ENCODE measurements at regions of chr2 and their contacts with region 1.

Region 1: GRCh38 chr2:54704688-54705605 is 18.5 kb upstream of the EML6 start:
- DNase-seq: peak; percentile 40 to 74
- ATAC-seq: peak; percentile 81 to 89; a peak in 5 of 6 replicates
- H3K4me3 ChIP-seq: no peak overlapping the region
- H3K27ac ChIP-seq: no peak overlapping the region
- H3K4me1 ChIP-seq: no peaks in the 10 kb centered on the region
- CTCF ChIP-seq: peak; percentile 93
- EP300 ChIP-seq: no peak
- POLR2A ChIP-seq: no peak
- RAD21 ChIP-seq: peak; percentile 93 to 95

Region 2: DNA sequence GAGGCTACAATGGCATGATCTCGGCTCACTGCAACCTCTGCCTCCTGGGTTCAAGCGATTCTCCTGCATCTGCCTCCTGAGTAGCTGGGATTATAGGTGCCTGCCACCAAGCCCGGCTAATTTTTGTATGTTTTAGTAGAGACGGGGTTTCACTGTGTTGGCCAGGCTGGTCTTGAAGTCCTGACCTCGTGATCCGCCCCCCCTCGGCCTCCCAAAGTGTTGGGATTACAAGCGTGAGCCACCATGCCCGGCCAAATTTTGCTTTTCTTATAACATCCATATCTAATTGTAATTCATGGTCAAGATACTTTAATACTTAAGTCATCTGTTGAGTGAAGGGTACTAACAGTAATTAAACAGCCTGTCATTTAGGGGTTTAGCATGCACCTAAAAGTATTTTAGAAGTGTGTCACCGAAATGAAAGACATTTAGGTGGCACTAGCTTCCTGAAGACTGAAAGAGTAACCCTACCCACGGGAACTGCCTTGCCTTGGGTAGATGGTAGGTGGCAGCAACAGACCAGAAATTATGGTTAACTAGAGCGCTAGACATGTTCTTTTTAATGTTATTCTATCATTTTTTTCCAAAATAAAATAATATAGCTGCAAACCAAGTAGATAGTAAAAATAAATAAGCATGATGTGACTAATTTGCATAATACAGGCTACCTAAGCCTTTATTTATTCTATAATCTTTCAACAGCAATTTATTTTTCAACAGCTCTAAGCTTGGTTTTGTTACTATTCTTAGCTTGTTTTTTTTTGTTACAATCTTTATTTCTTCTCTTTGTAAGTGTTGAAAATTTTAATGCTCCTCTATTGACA is 598.1 kb before region 1 on chr2:
- CTCF ChIA-PET with region 1: interaction called, 73 read pairs
- POLR2A ChIA-PET with region 1: interaction called, 10 read pairs
- DNase-seq: peak; percentile 51 to 72
- ATAC-seq: peak; percentile 83 to 88
- H3K4me3 ChIP-seq: no peak overlapping the region
- H3K27ac ChIP-seq: peak overlapping the region in 1 of 2 experiments; percentile 22; a peak in 1 of 6 replicates
- H3K4me1 ChIP-seq: peaks cover 19% of the 10 kb centered on the region
- CTCF ChIP-seq: peak; percentile 94
- EP300 ChIP-seq: no peak
- POLR2A ChIP-seq: no peak
- RAD21 ChIP-seq: peak; percentile 92 to 94

Region 3: GRCh38 chr2:54228945-54229344 is 476.0 kb before region 1 on chr2:
- CTCF ChIA-PET with region 1: no interaction called
- POLR2A ChIA-PET with region 1: no interaction called
- DNase-seq: no peak
- ATAC-seq: no peak
- H3K4me3 ChIP-seq: no peak overlapping the region
- H3K27ac ChIP-seq: no peak overlapping the region
- H3K4me1 ChIP-seq: no peaks in the 10 kb centered on the region
- CTCF ChIP-seq: no peak
- EP300 ChIP-seq: no peak
- POLR2A ChIP-seq: no peak
- RAD21 ChIP-seq: no peak

Region 4: GRCh38 chr2:54350426-54350825 is 354.5 kb before region 1 on chr2:
- CTCF ChIA-PET with region 1: no interaction called
- POLR2A ChIA-PET with region 1: no interaction called
- DNase-seq: no peak
- ATAC-seq: no peak
- H3K4me3 ChIP-seq: no peak overlapping the region
- H3K27ac ChIP-seq: no peak overlapping the region
- H3K4me1 ChIP-seq: no peaks in the 10 kb centered on the region
- CTCF ChIP-seq: no peak
- EP300 ChIP-seq: no peak
- POLR2A ChIP-seq: no peak
- RAD21 ChIP-seq: no peak

Region 5: DNA sequence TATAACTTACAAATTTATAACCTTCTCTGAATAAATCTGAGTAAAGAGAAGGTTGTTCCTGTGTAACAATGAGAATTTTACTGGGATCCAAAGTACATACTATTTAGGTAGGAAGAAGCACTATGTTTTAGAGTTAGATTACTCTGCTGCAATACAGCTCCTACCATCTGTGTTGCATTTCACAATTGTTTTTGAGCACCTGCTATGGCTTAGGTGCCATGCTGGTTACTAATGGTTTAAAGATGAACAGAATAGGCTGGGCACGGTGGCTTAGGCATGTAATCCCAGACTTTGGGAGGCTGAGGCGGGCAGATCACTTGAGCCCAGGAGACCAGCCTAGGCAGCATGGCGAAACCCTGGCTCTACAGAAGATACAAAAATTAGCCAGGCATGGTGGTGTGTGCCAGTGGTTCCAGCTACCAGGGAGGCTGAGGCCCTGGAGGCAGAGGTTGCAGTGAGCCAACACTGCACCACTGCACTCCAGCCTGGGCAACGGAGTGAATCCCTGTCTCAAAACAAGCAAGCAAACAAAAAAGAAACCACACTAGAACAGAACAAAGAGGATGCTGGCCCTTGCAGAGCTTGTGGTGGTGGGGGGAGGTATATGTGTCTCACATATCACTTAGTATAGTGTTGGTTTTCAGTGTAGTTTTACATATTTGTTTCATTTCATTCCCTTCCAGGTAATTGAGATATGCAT is 192.1 kb before region 1 on chr2:
- CTCF ChIA-PET with region 1: interaction called, 12 read pairs
- POLR2A ChIA-PET with region 1: no interaction called
- DNase-seq: no peak
- ATAC-seq: no peak
- H3K4me3 ChIP-seq: no peak overlapping the region
- H3K27ac ChIP-seq: no peak overlapping the region
- H3K4me1 ChIP-seq: no peaks in the 10 kb centered on the region
- CTCF ChIP-seq: no peak
- EP300 ChIP-seq: no peak
- POLR2A ChIP-seq: no peak
- RAD21 ChIP-seq: no peak

Region 6: GRCh38 chr2:54566896-54567295 is 138.1 kb before region 1 on chr2:
- CTCF ChIA-PET with region 1: no interaction called
- POLR2A ChIA-PET with region 1: no interaction called
- DNase-seq: no peak
- ATAC-seq: no peak
- H3K4me3 ChIP-seq: no peak overlapping the region
- H3K27ac ChIP-seq: peak overlapping the region in 1 of 2 experiments; percentile 70; a peak in 3 of 6 replicates
- H3K4me1 ChIP-seq: peaks cover 98% of the 10 kb centered on the region
- CTCF ChIP-seq: no peak
- EP300 ChIP-seq: no peak
- POLR2A ChIP-seq: no peak
- RAD21 ChIP-seq: no peak

Region 7: DNA sequence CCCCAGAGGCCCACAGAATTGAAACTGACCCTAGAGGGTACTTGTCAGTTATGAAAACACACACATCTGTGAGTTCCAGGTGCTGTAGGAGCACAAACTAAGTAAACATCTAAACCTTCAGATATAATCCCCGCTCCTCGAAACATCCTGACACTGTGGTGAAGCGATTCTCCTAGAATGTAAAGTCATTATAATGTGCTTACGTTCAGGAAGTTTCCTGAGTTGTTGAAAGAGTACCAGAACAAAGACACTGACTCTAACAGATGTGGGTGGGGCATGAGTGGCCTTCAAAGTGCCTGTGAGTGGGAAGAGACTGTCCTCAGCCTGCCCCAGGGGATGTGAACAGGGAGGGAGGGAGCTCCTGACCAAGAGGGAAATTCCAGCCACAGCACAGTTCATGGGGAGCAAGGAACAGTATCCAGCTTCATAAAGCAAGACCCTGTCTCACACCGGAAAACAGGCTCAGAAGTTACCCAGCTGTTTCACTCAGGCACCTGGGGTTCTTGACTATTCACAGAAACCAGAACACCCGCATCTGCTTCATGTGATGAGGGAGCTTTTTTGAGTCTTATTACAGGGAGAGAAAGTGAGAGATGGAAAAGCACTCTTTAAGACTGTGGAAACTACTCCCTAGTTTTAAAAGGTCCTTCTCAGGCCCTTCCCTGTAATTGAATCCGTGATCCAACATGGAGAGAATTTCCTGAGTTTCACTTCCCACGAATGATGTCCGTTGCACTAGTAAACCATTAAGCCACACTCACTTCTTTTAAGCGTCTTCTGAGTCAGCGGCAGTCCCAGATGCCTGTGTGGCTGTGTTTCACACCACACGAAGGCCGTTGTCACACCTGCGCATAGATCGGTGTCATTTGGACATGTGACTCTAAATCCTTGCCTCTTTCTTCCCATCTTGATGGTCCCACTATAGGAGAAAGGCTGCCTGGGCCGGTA is 70.1 kb before region 1 on chr2:
- CTCF ChIA-PET with region 1: interaction called, 10 read pairs
- POLR2A ChIA-PET with region 1: no interaction called
- DNase-seq: peak; percentile 83 to 89
- ATAC-seq: peak; percentile 48 to 71
- H3K4me3 ChIP-seq: peak overlapping the region; percentile 1; the same call in 1 of the 3 replicates
- H3K27ac ChIP-seq: peak overlapping the region; percentile 82 to 87
- H3K4me1 ChIP-seq: peaks cover 89% of the 10 kb centered on the region
- CTCF ChIP-seq: no peak
- EP300 ChIP-seq: peak in 1 of 2 experiments; percentile 57; a peak in 2 of 5 replicates
- POLR2A ChIP-seq: no peak
- RAD21 ChIP-seq: no peak

Region 8: GRCh38 chr2:54680397-54681041 is 24.4 kb before region 1 on chr2:
- CTCF ChIA-PET with region 1: interaction called, 20 read pairs
- POLR2A ChIA-PET with region 1: no interaction called
- DNase-seq: no peak
- ATAC-seq: no peak
- H3K4me3 ChIP-seq: no peak overlapping the region
- H3K27ac ChIP-seq: no peak overlapping the region
- H3K4me1 ChIP-seq: no peaks in the 10 kb centered on the region
- CTCF ChIP-seq: no peak
- EP300 ChIP-seq: no peak
- POLR2A ChIP-seq: no peak
- RAD21 ChIP-seq: no peak

Region 9: DNA sequence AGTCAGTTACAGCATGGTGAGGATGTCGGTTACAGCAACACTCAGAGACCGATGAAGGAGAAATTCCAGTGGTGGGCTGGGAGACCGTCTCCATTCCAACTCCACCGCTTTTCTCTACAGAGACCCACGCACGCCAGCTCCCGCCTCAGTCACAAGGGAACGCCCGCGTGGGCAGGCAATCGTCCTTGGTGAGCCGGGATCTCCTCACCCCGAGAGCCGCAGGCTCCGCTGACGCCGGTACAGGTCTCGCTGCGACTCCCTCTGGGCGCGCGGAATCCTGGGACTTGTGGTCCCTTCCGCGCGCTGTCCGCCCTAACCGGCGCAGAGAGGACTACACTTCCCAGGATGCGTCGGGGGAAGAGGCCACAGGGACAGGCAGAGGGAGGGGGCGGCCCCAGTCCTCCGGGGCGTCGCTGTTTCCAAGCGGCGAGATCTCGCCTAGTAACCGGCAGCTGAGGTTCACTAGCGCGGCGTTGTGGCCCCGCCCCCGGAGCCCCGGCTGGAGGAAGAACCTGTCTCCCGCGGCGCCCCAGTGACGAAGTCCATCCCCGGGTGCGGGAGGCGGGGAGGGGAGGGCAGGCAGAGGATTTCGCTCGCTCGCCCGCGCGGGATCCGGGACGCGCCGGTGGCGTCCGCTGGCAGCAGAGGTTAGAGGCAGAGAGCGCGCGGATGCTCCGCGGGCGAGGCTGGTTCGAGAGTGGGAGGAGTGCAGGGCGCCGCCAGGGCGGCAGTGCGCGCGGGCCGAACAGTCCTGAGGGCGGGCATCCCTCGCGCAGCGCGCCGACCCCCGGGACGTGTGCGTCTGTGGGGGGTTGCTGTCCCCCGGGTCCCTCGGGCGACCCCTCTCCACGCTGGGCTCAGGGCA is 18.4 kb after region 1 on chr2 and contains the start of gene EML6:
- CTCF ChIA-PET with region 1: interaction called, 46 read pairs
- POLR2A ChIA-PET with region 1: interaction called, 6 read pairs
- DNase-seq: peak; percentile 97 to 99
- ATAC-seq: peak; percentile 95 to 99
- H3K4me3 ChIP-seq: peak within 1 kb of the TSS; percentile 49
- H3K27ac ChIP-seq: peak within 1 kb of the TSS; percentile 62 to 85
- H3K4me1 ChIP-seq: peaks cover 9% of the 10 kb centered on the region
- CTCF ChIP-seq: peak; percentile 27; the same call in 2 of the 3 replicates
- EP300 ChIP-seq: no peak
- POLR2A ChIP-seq: peak; percentile 92
- RAD21 ChIP-seq: peak in 1 of 2 experiments; percentile 14; a peak in 1 of 5 replicates
- polyA plus RNA-seq, gene EML6: 1.5 and 3.0 TPM in 2 replicates